Caco-2 (cell line): ENCODE measurements at regions of chr9 and their contacts with region 1.

Region 1: DNA sequence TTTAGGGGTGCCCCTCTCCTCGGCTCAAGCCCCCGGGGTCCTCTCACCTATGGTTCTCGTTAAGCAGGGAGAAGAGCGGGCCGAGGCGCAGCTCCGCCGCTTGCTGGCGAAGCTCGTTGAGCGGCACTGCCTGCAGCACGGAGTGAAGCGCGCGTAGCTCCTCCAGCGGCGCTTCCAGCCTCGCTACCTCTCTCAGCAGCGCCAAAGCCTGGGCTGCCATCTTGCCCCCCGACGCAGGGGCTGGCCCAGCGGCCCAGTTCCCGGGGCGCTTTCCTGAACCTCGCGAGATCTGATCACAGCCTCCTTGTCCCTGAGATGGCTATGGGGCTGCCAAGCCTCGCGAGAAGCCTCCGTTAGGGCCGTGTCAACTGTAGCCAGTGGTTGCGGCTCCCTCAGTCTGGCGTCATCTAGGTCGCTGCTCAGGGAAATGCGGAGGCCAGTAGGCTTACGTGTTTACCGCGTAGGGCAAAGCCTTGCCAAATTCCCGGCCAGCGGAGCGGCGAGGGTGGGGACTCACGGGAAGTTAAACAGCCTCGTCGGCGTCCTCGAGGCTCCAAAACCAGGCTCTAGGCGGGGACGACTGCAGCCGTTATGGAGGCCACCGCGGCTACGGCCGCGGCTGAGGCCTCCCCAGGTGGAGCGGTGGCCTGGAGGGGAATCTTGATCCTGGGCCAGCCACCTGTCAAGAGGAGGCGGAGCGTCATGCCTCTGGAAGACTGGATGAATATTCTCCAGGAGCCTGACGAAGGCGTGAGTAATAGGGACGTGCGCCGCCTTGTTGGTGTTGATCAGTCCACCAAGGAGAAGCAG is at the start of gene PSMD5:
- DNase-seq: peak; percentile 98 to 100
- H3K4me3 ChIP-seq: peak within 1 kb of the TSS; percentile 89
- H3K4me3 Mint-ChIP-seq: peak within 1 kb of the TSS; percentile 100
- H3K27ac Mint-ChIP-seq: peak within 1 kb of the TSS; percentile 100
- H3K4me1 ChIP-seq: peaks cover 21% of the 10 kb centered on the region
- H3K4me1 Mint-ChIP-seq: peaks cover 31% of the 10 kb centered on the region
- H3K27me3 ChIP-seq: no peaks in the 10 kb centered on the region
- H3K27me3 Mint-ChIP-seq: no peaks in the 10 kb centered on the region
- CTCF ChIP-seq: no peak
- total RNA-seq, gene PSMD5: 53.7 and 68.1 TPM in 2 replicates

Region 2: DNA sequence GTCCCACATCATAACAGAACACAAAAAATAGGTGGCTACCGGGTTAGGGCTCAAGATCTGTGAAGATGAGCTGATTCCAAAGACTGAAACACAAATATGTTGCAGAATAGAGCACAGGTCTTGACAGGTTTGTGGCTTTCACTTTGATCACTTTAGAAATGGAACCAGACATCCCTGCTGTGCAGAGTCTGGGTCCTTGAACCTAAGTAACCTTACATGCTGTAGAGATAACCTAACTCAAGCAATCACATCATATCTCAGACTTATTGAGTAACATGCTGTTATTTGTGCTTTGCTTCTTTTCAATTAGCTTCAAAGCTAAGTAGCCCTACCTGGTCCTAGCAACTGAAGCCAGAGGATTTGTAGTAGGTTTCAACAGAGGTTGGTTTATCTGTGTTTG is 74.0 kb before region 1 on chr9:
- CTCF ChIA-PET with region 1: no interaction called
- POLR2A ChIA-PET with region 1: no interaction called
- intact Hi-C with region 1: loop called (anchors 1 kb)
- DNase-seq: peak in 1 of 2 experiments; percentile 38
- H3K4me3 ChIP-seq: no peak overlapping the region
- H3K4me3 Mint-ChIP-seq: no peak overlapping the region
- H3K27ac Mint-ChIP-seq: no peak overlapping the region
- H3K4me1 ChIP-seq: peaks cover 42% of the 10 kb centered on the region
- H3K4me1 Mint-ChIP-seq: peaks cover 33% of the 10 kb centered on the region
- H3K27me3 ChIP-seq: no peaks in the 10 kb centered on the region
- H3K27me3 Mint-ChIP-seq: no peaks in the 10 kb centered on the region
- CTCF ChIP-seq: no peak

Region 3: DNA sequence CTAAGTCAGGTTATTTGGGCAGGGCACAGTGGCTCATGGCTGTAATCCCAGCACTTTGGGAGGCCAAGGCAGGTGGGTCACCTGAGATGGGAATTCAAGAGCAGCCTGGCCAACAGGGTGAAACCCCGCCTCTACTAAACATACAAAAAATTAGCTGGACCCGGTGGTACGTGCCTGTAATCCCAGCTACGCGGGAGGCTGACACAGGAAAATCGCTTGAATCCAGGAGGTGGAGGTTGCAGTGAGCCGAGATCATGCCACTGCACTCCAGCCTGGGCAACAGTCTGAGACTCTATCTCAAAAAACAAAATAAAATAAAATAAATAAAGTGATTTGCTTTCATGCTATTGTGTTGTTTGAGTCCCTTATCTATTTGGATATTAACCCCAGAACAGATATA is 41.5 kb before region 1 on chr9:
- CTCF ChIA-PET with region 1: no interaction called
- POLR2A ChIA-PET with region 1: no interaction called
- intact Hi-C with region 1: loop called (anchors 2 kb)
- DNase-seq: peak; percentile 61 to 67
- H3K4me3 ChIP-seq: no peak overlapping the region
- H3K4me3 Mint-ChIP-seq: peak overlapping the region; percentile 10
- H3K27ac Mint-ChIP-seq: no peak overlapping the region
- H3K4me1 ChIP-seq: peaks cover 20% of the 10 kb centered on the region
- H3K4me1 Mint-ChIP-seq: peaks cover 9% of the 10 kb centered on the region
- H3K27me3 ChIP-seq: no peaks in the 10 kb centered on the region
- H3K27me3 Mint-ChIP-seq: no peaks in the 10 kb centered on the region
- CTCF ChIP-seq: no peak

Region 4: GRCh38 chr9:120875954-120876841 is 33.3 kb after region 1 on chr9:
- CTCF ChIA-PET with region 1: no interaction called
- POLR2A ChIA-PET with region 1: no interaction called
- intact Hi-C with region 1: loop called (anchors 1 kb)
- DNase-seq: peak; percentile 85 to 89
- H3K4me3 ChIP-seq: peak overlapping the region; percentile 96
- H3K4me3 Mint-ChIP-seq: peak overlapping the region; percentile 86
- H3K27ac Mint-ChIP-seq: peak overlapping the region; percentile 29
- H3K4me1 ChIP-seq: peaks cover 40% of the 10 kb centered on the region
- H3K4me1 Mint-ChIP-seq: peaks cover 42% of the 10 kb centered on the region
- H3K27me3 ChIP-seq: no peaks in the 10 kb centered on the region
- H3K27me3 Mint-ChIP-seq: peaks cover 2% of the 10 kb centered on the region
- CTCF ChIP-seq: peak in 1 of 2 experiments; percentile 2

Region 5: DNA sequence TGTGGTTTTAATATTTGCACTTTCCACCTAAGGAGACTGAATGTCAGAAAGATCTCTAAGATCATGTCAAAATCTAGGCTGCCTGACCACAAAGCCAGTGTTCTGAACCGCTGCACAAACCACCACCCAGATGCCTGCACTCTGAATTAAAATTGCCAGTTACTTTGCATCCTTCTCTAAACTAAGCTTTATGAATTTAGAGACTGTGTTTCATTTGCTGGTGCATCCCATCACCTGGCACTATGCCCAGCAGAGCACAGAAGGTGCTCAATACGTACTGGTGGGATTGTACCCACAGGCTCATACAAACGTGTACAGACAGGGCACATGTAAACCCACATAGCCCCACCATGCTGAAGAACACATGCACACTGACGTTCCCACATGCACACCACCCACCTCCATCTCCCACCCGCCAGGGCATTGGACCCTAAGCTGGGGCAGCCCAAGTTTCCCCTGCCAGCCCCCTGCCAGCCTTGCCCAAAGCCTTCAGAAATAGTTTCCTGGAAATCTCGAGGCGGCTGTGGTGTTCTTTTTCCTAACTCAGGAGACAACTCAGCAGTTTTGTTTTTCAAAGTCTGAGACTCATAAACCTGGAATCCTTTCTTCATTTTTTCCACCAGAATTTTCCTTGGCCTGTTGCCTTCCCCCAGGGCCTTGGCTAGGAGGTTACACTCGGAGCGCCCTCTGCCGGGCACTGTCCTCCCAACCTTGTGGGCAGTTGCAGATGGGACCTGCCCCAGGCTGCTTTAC is 93.3 kb after region 1 on chr9:
- CTCF ChIA-PET with region 1: no interaction called
- POLR2A ChIA-PET with region 1: no interaction called
- intact Hi-C with region 1: loop called (anchors 2 kb)
- DNase-seq: peak; percentile 86 to 90
- H3K4me3 ChIP-seq: no peak overlapping the region
- H3K4me3 Mint-ChIP-seq: no peak overlapping the region
- H3K27ac Mint-ChIP-seq: no peak overlapping the region
- H3K4me1 ChIP-seq: 0 out of 2 replicates have a peak, but pooled peaks cover 8% of the 10 kb centered on the region
- H3K4me1 Mint-ChIP-seq: peaks cover 10% of the 10 kb centered on the region
- H3K27me3 ChIP-seq: peaks cover 2% of the 10 kb centered on the region; the same call in 1 of the 2 replicates
- H3K27me3 Mint-ChIP-seq: no peaks in the 10 kb centered on the region
- CTCF ChIP-seq: peak; percentile 84 to 96